ENCODE measurements at regions of chr11 and their contacts with region 1.

Region 1: DNA sequence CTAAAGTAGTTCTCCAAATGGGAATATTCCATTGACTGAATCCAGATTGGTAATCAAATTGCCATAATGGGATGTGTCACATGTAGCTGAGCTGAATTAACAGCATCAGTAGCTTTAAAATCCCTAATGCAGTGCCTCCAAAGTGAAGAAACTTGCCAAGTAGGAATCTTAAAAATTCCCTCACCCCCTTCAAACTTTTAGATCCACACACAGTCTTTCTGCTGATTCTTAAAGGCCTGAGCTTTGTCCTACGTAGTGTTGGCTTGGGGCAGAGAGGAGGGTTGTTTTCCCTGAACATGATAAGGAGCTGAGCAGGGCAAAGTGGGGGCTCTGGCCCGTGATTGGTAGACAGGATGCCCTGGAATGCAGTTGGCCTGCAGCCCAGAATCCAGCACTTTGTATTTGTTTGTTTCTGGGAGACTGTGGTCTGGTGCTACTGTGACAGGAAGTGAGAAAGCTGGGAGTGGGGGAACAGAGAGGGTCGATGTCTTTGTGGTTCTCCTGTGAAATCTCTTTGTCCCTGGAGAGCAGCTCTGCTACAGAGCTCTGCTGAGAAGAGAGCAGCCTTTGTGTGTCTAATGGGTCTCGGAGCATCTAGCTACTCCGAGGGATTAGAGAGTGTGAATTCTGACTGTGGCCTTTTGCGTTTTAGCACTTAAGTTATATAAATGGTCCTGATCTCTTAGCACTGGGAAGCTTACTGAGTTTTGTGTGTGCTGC is 16.9 kb downstream of the CTNND1 start:
- DNase-seq: no peak
- H3K4me3 Mint-ChIP-seq: no peak overlapping the region
- H3K27ac Mint-ChIP-seq: no peak overlapping the region
- H3K4me1 Mint-ChIP-seq: peaks cover 21% of the 10 kb centered on the region
- H3K27me3 Mint-ChIP-seq: no peaks in the 10 kb centered on the region

Region 2: DNA sequence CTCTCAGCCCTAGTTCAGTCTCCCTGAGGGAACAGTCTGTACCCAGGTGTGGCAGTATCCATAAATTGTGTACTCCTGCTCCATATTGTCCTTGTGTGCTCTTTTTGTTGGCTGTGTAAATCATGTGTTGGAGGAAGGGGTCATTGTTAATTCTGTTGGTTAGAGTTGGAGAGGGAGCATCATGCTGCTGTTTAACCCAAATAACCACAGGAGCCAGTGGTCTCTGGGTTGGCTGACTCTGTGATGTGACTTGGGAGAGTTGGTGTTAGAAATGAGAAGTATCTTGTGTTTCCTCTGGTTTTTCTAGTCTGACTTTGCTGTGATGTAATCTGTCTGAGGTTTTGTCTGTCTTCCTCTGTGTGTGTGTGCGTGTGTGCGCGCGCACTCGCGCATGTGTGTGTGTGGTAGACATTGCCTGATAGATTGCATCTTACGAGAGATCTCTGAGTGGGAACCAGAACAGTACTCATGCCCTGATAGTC is 13.6 kb after region 1 on chr11:
- CTCF ChIA-PET with region 1: interaction called, 14 read pairs
- POLR2A ChIA-PET with region 1: no interaction called
- DNase-seq: peak; percentile 88
- H3K4me3 Mint-ChIP-seq: peak overlapping the region; percentile 49
- H3K27ac Mint-ChIP-seq: peak overlapping the region; percentile 89
- H3K4me1 Mint-ChIP-seq: peaks cover 54% of the 10 kb centered on the region
- H3K27me3 Mint-ChIP-seq: no peaks in the 10 kb centered on the region

Measured in activated CD4-positive, alpha-beta T cell treated with anti-CD3 and anti-CD28 coated beads, Interleukin-2, amount 10 ng/mL, durations not matched to agents 7 days and 5 days (primary cell).